Heart left ventricle (tissue), 16 donors: ENCODE measurements at regions of chr11 and their contacts with region 1.

Region 1: GRCh38 chr11:119101759-119102423 is at the start of gene DPAGT1:
- DNase-seq: peak; percentile 89 to 94 (median 92)
- ATAC-seq: peak; percentile 93 to 97 (median 96)
- H3K4me3 ChIP-seq: peak within 1 kb of the TSS; percentile 56 to 94 (median 84)
- H3K27ac ChIP-seq: peak within 1 kb of the TSS; percentile 78 to 97 (median 92)
- H3K4me1 ChIP-seq: peaks cover 8 to 43% (median 34%) of the 10 kb centered on the region in 12 donors
- H3K27me3 ChIP-seq: no peaks in the 10 kb centered on the region
- CTCF ChIP-seq: no peak
- POLR2A ChIP-seq: no peak
- total RNA-seq, gene DPAGT1: 11.2 to 32.4 (median 16.5) TPM

Region 2: GRCh38 chr11:119067371-119068222 is 34.3 kb before region 1 on chr11 and contains the start of gene VPS11:
- intact Hi-C with region 1: loop called in 1 of 10 experiments (anchors 2 kb)
- DNase-seq: peak; percentile 97 to 99 (median 99)
- ATAC-seq: peak; percentile 98 to 99 (median 98)
- H3K4me3 ChIP-seq: peak within 1 kb of the TSS; percentile 71 to 97 (median 88)
- H3K27ac ChIP-seq: peak within 1 kb of the TSS; percentile 60 to 95 (median 83)
- H3K4me1 ChIP-seq: peaks cover 0 to 39% (median 24%) of the 10 kb centered on the region in 12 donors
- H3K27me3 ChIP-seq: no peaks in the 10 kb centered on the region
- CTCF ChIP-seq: no peak
- POLR2A ChIP-seq: peak in 1 of 2 donors; percentile 69
- total RNA-seq, gene VPS11: 18.7 to 33.3 (median 21.5) TPM

Region 3: GRCh38 chr11:119168471-119169281 is 66.8 kb after region 1 on chr11 and contains the start of gene NLRX1:
- intact Hi-C with region 1: loop called in 1 of 10 experiments (anchors 2 kb)
- DNase-seq: peak; percentile 85 to 92 (median 89)
- ATAC-seq: peak; percentile 86 to 96 (median 94)
- H3K4me3 ChIP-seq: peak within 1 kb of the TSS; percentile 40 to 99 (median 92)
- H3K27ac ChIP-seq: peak within 1 kb of the TSS; percentile 80 to 98 (median 96)
- H3K4me1 ChIP-seq: peaks cover 0 to 19% (median 6%) of the 10 kb centered on the region in 12 donors
- H3K27me3 ChIP-seq: no peaks in the 10 kb centered on the region
- CTCF ChIP-seq: peak; percentile 76 to 90 (median 85)
- POLR2A ChIP-seq: peak; percentile 12 to 71
- total RNA-seq, gene NLRX1: 19.7 to 47.0 (median 30.7) TPM

Region 4: GRCh38 chr11:119315131-119316015 is 213.5 kb after region 1 on chr11:
- intact Hi-C with region 1: loop called in 1 of 10 experiments (anchors 5 kb)
- DNase-seq: peak; percentile 55 to 69 (median 61)
- ATAC-seq: peak; percentile 23 to 46 (median 26)
- H3K4me3 ChIP-seq: peak overlapping the region; percentile 25 to 86 (median 75)
- H3K27ac ChIP-seq: peak overlapping the region; percentile 81 to 99 (median 93)
- H3K4me1 ChIP-seq: peaks cover 0 to 66% (median 40%) of the 10 kb centered on the region in 12 donors
- H3K27me3 ChIP-seq: peaks cover 0 to 33% (median 0%) of the 10 kb centered on the region in 9 donors
- CTCF ChIP-seq: peak in 8 of 12 donors; percentile 7 to 34 (median 10)
- POLR2A ChIP-seq: no peak

Region 5: GRCh38 chr11:119334174-119334930 is 232.5 kb after region 1 on chr11 and contains the start of gene RNF26:
- intact Hi-C with region 1: loop called in 1 of 10 experiments (anchors 10 kb)
- DNase-seq: peak; percentile 94 to 96 (median 96)
- ATAC-seq: peak; percentile 92 to 96 (median 93)
- H3K4me3 ChIP-seq: peak within 1 kb of the TSS; percentile 76 to 99 (median 86)
- H3K27ac ChIP-seq: peak within 1 kb of the TSS; percentile 50 to 91 (median 82)
- H3K4me1 ChIP-seq: peaks cover 5 to 47% (median 32%) of the 10 kb centered on the region in 12 donors
- H3K27me3 ChIP-seq: peaks cover 0 to 3% (median 0%) of the 10 kb centered on the region in 9 donors
- CTCF ChIP-seq: no peak
- POLR2A ChIP-seq: peak; percentile 11 to 48
- total RNA-seq, gene RNF26: 8.1 to 22.4 (median 11.8) TPM

Region 6: GRCh38 chr11:119445850-119446249 is 344.0 kb after region 1 on chr11:
- intact Hi-C with region 1: no loop called
- DNase-seq: no peak
- ATAC-seq: no peak
- H3K4me3 ChIP-seq: no peak overlapping the region
- H3K27ac ChIP-seq: no peak overlapping the region
- H3K4me1 ChIP-seq: peaks cover 0 to 7% (median 0%) of the 10 kb centered on the region in 12 donors
- H3K27me3 ChIP-seq: peaks cover 0 to 4% (median 0%) of the 10 kb centered on the region in 9 donors
- CTCF ChIP-seq: no peak
- POLR2A ChIP-seq: no peak